A673 (cell line): ENCODE measurements at regions of chr19 and their contacts with region 1.

Region 1: GRCh38 chr19:12872941-12873890 is 8.0 kb downstream of the DNASE2 start:
- DNase-seq: peak; percentile 85
- H3K4me3 ChIP-seq: peak overlapping the region; percentile 10
- H3K27ac ChIP-seq: no peak overlapping the region
- H3K4me1 ChIP-seq: no peaks in the 10 kb centered on the region
- H3K27me3 ChIP-seq: no peaks in the 10 kb centered on the region
- CTCF ChIP-seq: no peak

Region 2: DNA sequence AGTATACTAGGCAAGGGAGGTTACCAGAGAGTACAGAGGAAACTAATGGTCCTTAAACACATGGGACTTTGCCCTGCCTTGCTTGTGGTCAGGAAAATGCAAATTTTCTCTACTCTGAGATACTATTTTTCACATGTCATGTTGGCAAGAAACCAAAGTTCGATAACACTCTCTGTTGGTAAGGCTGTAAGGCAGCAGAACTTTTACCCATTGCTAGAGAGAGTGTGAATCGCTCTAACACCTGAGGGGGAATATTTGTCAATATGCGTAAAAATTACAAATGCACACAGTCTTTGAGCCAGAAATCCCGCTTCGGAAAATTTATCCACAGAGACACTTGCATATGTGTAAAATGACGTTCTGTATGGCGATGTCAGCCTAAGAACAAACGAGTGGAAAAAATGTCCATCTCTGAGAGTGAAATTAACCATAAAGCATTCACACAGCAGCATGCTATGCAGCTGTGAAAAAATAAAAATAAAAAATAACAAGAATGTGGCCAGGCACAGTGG is 1142.4 kb after region 1 on chr19:
- CTCF ChIA-PET with region 1: no interaction called
- POLR2A ChIA-PET with region 1: interaction called, 19 read pairs
- intact Hi-C with region 1: no loop called
- DNase-seq: no peak
- H3K4me3 ChIP-seq: no peak overlapping the region
- H3K27ac ChIP-seq: no peak overlapping the region
- H3K4me1 ChIP-seq: no peaks in the 10 kb centered on the region
- H3K27me3 ChIP-seq: no peaks in the 10 kb centered on the region
- CTCF ChIP-seq: no peak